HEK293T (cell line): ENCODE measurements at regions of chr2 and their contacts with region 1.

Region 1: DNA sequence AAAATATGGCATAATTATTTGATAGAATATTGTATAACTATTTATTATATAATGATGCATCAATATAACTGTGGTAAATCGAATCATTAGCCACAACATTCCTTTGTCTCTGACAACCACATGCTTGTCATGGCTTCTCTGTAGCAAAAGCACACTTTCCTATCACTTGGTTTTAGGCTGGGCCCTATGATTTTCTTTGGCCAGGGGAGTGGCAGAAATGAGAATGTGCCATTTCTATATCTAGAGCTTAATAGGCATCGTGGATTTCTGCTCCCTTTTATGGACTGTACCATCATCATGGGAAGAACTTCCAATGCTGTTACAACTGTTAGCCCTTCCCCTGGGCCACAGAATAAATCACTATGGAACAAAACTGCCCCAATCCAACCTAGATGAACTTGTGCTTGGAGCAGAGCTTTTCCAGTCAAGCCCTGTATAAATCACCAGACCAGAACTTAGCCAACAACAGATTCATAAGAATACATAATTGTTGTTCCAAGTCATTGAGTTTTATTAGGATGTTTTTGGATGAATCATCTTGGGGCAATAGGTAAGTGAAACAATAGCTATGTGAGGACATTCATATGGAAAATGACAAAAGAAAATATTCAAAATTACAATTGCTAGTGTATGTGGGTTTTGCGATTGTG is 715.8 kb downstream of the ERBB4 start:
- DNase-seq: no peak

Region 2: GRCh38 chr2:210768329-210768910 is 1054.4 kb before region 1 on chr2:
- CTCF ChIA-PET with region 1: interaction called, 15 read pairs
- POLR2A ChIA-PET with region 1: no interaction called
- DNase-seq: no peak

Region 3: GRCh38 chr2:211623096-211623495 is 199.7 kb before region 1 on chr2:
- CTCF ChIA-PET with region 1: no interaction called
- POLR2A ChIA-PET with region 1: no interaction called
- DNase-seq: no peak

Region 4: GRCh38 chr2:211724933-211725332 is 97.9 kb before region 1 on chr2:
- CTCF ChIA-PET with region 1: no interaction called
- POLR2A ChIA-PET with region 1: no interaction called
- DNase-seq: no peak

Region 5: DNA sequence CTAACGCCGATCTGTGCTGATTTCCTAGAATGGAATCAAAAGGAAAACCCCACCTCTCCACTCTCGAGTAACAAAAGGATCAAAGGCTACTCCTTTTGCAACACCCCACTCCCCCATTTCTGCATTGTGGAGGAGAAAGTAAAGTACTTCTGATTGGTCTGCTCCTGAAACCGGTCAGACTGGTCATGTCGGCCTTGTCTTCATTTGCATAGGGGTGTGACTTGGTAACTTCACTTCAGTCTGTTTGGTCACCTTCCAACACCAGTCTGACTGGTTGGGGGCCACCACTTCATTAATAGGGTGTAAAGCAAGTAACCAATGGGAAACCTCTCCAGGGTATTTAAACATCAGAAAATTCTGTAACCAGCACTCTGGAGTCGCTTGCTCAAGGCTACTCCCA is 56.1 kb before region 1 on chr2:
- CTCF ChIA-PET with region 1: no interaction called
- POLR2A ChIA-PET with region 1: no interaction called
- DNase-seq: no peak